IMR-90 (cell line): ENCODE measurements at regions of chr11 and their contacts with region 1.

Region 1: GRCh38 chr11:65988791-65989592 is 13.0 kb downstream of the EIF1AD start:
- DNase-seq: peak; percentile 96
- ATAC-seq: peak; percentile 99
- H3K4me3 ChIP-seq: no peak overlapping the region
- H3K27ac ChIP-seq: no peak overlapping the region
- H3K4me1 ChIP-seq: no peaks in the 10 kb centered on the region
- H3K27me3 ChIP-seq: no peaks in the 10 kb centered on the region
- CTCF ChIP-seq: peak; percentile 99
- POLR2A ChIP-seq: 0 out of 2 replicates have a peak, but pooled peaks have one; percentile 52
- RAD21 ChIP-seq: peak; percentile 96

Region 2: DNA sequence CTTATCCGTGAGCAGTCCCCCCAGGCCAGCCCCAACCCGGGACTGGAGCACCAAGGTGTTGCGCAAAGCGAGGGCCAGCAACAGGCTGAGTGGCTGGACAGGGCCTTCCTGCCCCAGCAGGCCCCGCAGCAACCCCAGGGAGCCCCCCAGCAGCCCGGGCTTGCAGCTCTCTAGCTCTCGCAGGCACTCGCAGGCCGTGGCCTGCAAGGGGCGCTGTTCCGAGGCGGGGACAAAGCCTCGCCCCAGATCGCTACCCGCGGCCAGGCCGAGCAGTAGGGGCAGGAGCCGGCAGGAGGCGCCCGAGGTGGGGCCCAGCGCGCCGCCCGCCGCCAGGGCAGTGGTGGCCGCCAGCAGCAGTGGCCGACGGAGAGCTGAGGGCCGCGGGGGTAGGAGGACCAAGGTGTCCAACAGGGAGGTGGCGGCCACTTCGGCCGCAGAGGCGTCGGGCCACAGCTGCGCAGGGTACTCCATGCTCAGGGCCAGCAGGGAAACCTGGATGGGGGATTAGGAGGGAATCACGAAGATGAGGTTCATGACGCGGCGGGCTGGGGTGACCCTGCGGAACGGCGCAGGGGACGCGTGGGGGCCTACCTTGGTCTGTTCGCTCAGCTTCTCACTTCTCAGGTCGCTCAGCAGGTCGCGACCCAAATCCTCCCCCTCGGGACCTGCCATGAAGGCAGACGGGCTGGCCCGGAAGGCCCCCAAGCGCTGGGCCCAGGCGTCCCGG is 209.0 kb before region 1 on chr11:
- CTCF ChIA-PET with region 1: no interaction called
- POLR2A ChIA-PET with region 1: interaction called, 3 read pairs
- dilution Hi-C with region 1: no loop called
- in situ Hi-C with region 1: no loop called
- intact Hi-C with region 1: loop called (anchors 5 kb)
- DNase-seq: peak; percentile 67
- ATAC-seq: peak; percentile 84
- H3K4me3 ChIP-seq: peak overlapping the region; percentile 80
- H3K27ac ChIP-seq: peak overlapping the region; percentile 64
- H3K4me1 ChIP-seq: peaks cover 3% of the 10 kb centered on the region; the same call in 1 of the 2 replicates
- H3K27me3 ChIP-seq: peaks cover 19% of the 10 kb centered on the region
- CTCF ChIP-seq: peak; percentile 99
- POLR2A ChIP-seq: no peak; the same call in 1 of the 2 replicates
- RAD21 ChIP-seq: peak; percentile 69

Region 3: GRCh38 chr11:66022401-66023185 is 33.6 kb after region 1 on chr11:
- CTCF ChIA-PET with region 1: interaction called, 3 read pairs
- POLR2A ChIA-PET with region 1: interaction called, 12 read pairs
- dilution Hi-C with region 1: no loop called
- in situ Hi-C with region 1: no loop called
- intact Hi-C with region 1: no loop called
- DNase-seq: peak; percentile 29
- ATAC-seq: peak; percentile 95
- H3K4me3 ChIP-seq: no peak overlapping the region
- H3K27ac ChIP-seq: no peak overlapping the region
- H3K4me1 ChIP-seq: peaks cover 9% of the 10 kb centered on the region
- H3K27me3 ChIP-seq: no peaks in the 10 kb centered on the region; the same call in 1 of the 2 replicates
- CTCF ChIP-seq: peak; percentile 84
- POLR2A ChIP-seq: no peak
- RAD21 ChIP-seq: peak; percentile 70